ENCODE measurements at regions of chr17 and their contacts with region 1.

Region 1: DNA sequence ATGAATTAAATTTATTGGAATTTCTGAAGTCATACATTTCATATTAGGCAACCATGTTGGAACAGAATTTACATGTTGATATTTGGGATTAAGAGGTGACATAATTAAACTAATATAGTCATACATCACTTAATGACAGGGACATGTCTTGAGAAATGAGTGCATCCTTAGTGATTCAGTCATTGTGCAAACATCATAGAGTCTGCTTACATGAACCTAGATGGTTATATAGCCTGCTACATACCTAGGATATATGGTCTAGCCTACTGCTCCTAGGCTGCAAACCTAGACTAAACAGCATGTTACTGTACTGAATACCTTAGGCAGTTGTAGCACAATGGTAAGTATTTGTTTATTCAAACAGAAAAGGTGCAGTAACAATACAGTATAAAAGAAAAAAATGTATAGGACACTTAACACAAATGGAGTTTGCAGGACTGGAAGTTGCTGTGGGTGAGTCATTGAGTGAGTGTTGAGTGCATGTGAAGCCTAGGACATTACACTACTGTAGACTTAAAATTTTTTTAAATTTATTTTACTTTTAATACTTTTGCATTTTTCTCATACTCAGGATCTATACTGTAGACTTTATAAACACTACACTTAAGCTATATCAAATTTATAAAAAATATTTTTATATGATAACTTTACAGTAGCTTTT is 85.6 kb downstream of the OMG start:
- DNase-seq: no peak
- H3K4me3 ChIP-seq: no peak overlapping the region
- H3K27ac ChIP-seq: no peak overlapping the region
- H3K4me1 ChIP-seq: no peaks in the 10 kb centered on the region
- H3K27me3 ChIP-seq: no peaks in the 10 kb centered on the region
- CTCF ChIP-seq: no peak
- POLR2A ChIP-seq: no peak

Region 2: GRCh38 chr17:31015639-31016038 is 195.8 kb before region 1 on chr17:
- intact Hi-C with region 1: loop called (anchors 5 kb)
- DNase-seq: no peak
- H3K4me3 ChIP-seq: no peak overlapping the region
- H3K27ac ChIP-seq: no peak overlapping the region
- H3K4me1 ChIP-seq: no peaks in the 10 kb centered on the region
- H3K27me3 ChIP-seq: no peaks in the 10 kb centered on the region
- CTCF ChIP-seq: no peak
- POLR2A ChIP-seq: no peak